OCI-LY7 (cell line): ENCODE measurements at regions of chr10 and their contacts with region 1.

Region 1: GRCh38 chr10:117260084-117260483 is 19.2 kb downstream of the SLC18A2 start:
- DNase-seq: no peak
- H3K4me3 ChIP-seq: no peak overlapping the region
- H3K27ac ChIP-seq: no peak overlapping the region
- H3K4me1 ChIP-seq: no peaks in the 10 kb centered on the region
- CTCF ChIP-seq: no peak

Region 2: DNA sequence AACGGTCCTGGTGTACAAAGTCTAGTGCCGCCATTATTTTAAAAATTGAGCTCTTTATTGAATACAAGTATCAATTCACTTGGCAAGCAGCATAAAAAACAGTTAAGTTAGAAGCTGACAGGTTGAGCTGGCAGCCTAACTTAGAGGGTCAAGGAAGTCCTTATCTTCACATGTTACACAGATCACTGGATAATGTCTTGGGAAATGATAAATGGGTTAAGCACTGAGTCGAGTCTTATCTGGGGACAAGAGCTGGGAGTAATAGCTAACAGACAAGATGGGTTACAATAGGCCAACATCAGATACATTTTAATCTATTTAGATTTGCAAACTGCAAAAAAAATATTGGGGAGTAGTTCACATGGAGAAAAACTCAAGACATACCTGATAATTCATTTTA is 15.0 kb after region 1 on chr10:
- CTCF ChIA-PET with region 1: no interaction called
- POLR2A ChIA-PET with region 1: no interaction called
- intact Hi-C with region 1: loop called (anchors 1 kb)
- DNase-seq: no peak
- H3K4me3 ChIP-seq: no peak overlapping the region
- H3K27ac ChIP-seq: no peak overlapping the region
- H3K4me1 ChIP-seq: no peaks in the 10 kb centered on the region
- CTCF ChIP-seq: no peak